Endothelial cell of umbilical vein (primary cell): ENCODE measurements at regions of chr14 and their contacts with region 1.

Region 1: DNA sequence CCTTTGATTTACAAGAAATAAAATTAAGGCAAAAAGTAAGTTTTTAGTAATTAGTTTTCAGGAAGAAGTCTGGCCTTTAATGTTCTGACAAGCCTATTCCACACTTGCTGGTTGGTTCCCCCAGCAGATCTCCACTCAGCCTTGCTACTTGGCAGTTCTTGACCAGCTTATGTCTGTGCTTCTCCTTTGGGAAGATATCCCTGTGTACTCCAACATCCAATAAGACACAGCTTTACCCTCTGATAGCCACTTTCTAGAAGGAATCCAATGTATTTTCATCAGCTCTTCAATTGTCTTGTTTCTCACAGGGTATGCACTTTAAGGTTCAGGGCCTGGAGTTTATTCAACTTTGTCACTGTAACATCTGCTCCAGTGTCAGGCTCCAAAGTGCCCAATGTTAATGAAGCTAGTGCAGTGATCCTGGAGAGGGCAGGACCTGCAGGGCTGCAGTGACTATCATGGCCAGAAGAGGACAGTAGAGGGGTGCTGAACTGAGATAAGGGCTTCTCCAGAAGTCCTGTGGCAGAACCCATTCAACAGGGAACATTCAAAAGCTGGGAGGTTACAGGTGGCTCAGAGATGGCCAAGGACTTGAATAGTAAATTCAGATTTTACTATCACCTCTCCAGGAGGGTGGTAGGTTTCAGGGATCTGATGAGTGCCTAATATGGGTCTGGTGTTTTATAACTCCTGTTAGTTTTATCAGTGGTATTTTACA is 22.9 kb downstream of the JKAMP start:
- DNase-seq: peak; percentile 47
- H3K4me3 ChIP-seq: no peak overlapping the region
- H3K27ac ChIP-seq: no peak overlapping the region
- H3K4me1 ChIP-seq: no peaks in the 10 kb centered on the region
- H3K27me3 ChIP-seq: peaks cover 0 to 7% of the 10 kb centered on the region in 2 experiments
- CTCF ChIP-seq: peak; percentile 75 to 83
- POLR2A ChIP-seq: no peak

Region 2: DNA sequence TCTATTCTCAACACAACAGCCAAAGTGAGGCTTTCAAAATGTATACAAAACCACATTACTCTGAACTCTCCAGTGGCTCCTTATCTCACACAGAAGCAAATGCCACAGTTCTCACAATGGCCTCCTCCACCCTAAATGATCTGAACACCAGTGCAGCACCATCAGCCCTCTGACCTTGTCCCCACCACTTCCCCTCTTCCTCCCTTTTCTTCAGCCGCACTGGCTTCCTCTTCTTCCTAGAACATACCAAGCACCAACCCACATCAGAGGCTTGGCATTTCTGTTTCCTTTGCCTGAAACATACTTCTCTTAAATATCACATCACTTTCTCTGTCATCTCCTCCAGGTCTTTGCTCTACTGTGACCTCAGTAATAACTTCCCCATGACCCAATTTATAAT is 108.4 kb before region 1 on chr14:
- CTCF ChIA-PET with region 1: no interaction called
- POLR2A ChIA-PET with region 1: no interaction called
- dilution Hi-C with region 1: no loop called
- intact Hi-C with region 1: no loop called
- DNase-seq: no peak
- H3K4me3 ChIP-seq: no peak overlapping the region
- H3K27ac ChIP-seq: no peak overlapping the region
- H3K4me1 ChIP-seq: peaks cover 10% of the 10 kb centered on the region
- H3K27me3 ChIP-seq: no peaks in the 10 kb centered on the region
- CTCF ChIP-seq: no peak
- POLR2A ChIP-seq: no peak

Region 3: DNA sequence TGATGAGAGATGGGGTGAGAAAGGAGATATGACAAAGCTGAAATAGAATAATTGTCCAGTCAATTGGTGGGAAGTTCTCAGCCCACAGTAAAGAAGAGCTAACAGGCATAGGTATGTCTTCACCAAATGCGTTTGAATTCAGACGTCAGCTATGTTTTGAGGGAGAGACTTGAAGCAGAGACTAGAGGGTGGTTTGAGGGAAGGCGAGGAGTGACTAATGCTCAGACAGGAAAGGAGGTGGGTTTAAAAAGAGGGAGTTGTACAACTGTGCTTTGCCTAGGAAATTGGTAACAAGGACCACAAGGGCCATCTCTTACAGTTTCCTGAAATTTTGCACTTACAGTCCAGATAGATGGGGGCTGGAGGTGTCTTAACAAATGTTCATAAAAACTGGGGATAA is 16.5 kb before region 1 on chr14:
- CTCF ChIA-PET with region 1: interaction called, 22 read pairs
- POLR2A ChIA-PET with region 1: no interaction called
- dilution Hi-C with region 1: no loop called
- intact Hi-C with region 1: no loop called
- DNase-seq: no peak
- H3K4me3 ChIP-seq: no peak overlapping the region
- H3K27ac ChIP-seq: no peak overlapping the region
- H3K4me1 ChIP-seq: peaks cover 5% of the 10 kb centered on the region
- H3K27me3 ChIP-seq: no peaks in the 10 kb centered on the region
- CTCF ChIP-seq: no peak
- POLR2A ChIP-seq: no peak

Region 4: GRCh38 chr14:59570114-59570513 is 62.9 kb after region 1 on chr14:
- CTCF ChIA-PET with region 1: interaction called, 15 read pairs
- POLR2A ChIA-PET with region 1: no interaction called
- dilution Hi-C with region 1: no loop called
- intact Hi-C with region 1: no loop called
- DNase-seq: no peak
- H3K4me3 ChIP-seq: no peak overlapping the region
- H3K27ac ChIP-seq: no peak overlapping the region
- H3K4me1 ChIP-seq: no peaks in the 10 kb centered on the region
- H3K27me3 ChIP-seq: peaks cover 4 to 25% of the 10 kb centered on the region in 2 experiments
- CTCF ChIP-seq: no peak
- POLR2A ChIP-seq: no peak

Region 5: DNA sequence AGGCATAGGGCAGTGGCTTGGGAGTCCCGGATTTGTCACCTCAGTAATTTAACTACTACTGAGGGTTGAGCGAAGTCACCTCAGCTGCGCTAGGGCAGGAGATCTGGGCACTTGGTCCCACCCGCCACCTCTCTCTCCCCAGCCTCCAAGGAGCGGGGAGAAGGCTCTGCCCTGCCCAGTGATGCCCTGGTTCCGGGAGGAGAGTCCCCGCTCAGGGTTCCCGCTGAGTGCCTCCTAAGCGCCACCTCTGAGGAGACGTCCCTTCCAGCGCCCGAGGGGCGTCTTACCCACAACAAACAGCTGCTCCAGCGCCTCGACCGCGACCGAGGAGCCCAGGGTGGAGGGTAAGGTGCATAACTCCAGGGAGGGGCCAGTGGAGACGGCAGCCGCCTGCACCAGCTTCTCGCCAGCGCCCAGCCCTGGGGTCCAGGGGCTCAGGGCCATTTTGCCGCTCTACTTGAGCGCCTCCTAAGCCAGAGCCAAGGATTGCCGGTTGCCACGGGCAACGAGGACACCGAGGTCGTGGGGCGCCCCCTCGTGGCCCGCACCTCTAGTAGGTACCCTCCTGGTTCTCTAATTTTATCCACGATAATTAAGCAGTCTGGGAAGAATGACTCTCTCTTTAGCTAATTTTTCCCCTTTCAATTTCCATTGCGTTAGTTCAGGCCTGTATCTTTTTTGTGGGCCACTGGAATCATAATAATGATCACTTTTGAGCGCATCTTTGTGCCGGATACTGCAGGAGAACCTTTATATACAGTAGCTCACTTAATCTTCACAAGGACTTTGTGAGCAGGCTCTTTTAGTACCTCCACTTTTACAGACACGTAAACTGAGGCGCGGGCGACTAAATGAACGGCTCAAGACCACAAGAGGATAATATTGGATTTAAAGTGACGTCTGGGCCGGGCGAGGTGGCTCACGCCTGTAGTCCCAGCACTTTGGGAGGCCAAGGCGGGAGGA is 69.4 kb after region 1 on chr14 and contains the start of gene CCDC175:
- CTCF ChIA-PET with region 1: interaction called, 37 read pairs
- POLR2A ChIA-PET with region 1: no interaction called
- dilution Hi-C with region 1: no loop called
- intact Hi-C with region 1: loop called (anchors 1 kb)
- DNase-seq: peak; percentile 63
- H3K4me3 ChIP-seq: peak within 1 kb of the TSS in 2 of 3 experiments; percentile 18 to 38
- H3K27ac ChIP-seq: no peak within 1 kb of the TSS
- H3K4me1 ChIP-seq: no peaks in the 10 kb centered on the region
- H3K27me3 ChIP-seq: peaks cover 0 to 13% of the 10 kb centered on the region in 2 experiments
- CTCF ChIP-seq: peak; percentile 81 to 84
- POLR2A ChIP-seq: no peak
- total RNA-seq, gene CCDC175: not detected in 2 replicates

Region 6: DNA sequence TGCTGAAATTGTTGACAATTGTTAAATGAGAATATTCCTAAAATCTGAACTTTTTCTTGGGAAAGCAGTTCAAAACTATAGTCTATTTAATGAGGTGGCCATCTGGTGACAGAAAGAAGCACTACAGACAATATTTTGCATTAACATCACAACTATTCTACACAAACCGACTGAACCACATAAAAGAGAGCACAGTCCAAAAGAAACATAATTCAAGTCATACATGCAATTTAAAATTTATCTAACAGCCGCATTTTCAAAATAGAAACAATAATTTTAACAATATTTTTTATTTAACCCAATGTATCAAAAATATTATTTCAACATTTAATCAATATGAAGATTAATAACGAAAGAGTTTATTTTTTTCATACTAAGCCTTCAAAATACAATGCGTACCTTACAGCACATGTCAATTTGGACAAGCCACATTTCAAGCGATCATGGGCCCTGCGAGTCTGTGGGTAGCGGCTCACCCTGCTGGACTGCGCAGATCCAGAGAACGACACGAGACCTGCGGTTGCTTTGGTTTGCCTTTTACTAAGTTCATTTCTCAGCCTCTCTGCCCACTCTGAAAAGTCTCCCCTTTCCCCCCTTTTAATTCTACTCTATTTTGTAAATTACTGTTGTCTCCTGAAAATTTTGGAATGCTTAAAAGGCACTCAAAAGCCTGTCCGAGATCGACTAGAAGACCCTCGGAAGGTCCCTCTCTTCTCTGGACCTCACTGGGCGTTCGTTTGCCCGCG is 411.8 kb after region 1 on chr14:
- CTCF ChIA-PET with region 1: interaction called, 13 read pairs
- POLR2A ChIA-PET with region 1: no interaction called
- dilution Hi-C with region 1: no loop called
- intact Hi-C with region 1: no loop called
- DNase-seq: peak; percentile 38
- H3K4me3 ChIP-seq: no peak overlapping the region
- H3K27ac ChIP-seq: no peak overlapping the region
- H3K4me1 ChIP-seq: no peaks in the 10 kb centered on the region
- H3K27me3 ChIP-seq: peaks cover 19 to 41% of the 10 kb centered on the region in 2 experiments
- CTCF ChIP-seq: peak; percentile 4 to 21
- POLR2A ChIP-seq: no peak

Region 7: DNA sequence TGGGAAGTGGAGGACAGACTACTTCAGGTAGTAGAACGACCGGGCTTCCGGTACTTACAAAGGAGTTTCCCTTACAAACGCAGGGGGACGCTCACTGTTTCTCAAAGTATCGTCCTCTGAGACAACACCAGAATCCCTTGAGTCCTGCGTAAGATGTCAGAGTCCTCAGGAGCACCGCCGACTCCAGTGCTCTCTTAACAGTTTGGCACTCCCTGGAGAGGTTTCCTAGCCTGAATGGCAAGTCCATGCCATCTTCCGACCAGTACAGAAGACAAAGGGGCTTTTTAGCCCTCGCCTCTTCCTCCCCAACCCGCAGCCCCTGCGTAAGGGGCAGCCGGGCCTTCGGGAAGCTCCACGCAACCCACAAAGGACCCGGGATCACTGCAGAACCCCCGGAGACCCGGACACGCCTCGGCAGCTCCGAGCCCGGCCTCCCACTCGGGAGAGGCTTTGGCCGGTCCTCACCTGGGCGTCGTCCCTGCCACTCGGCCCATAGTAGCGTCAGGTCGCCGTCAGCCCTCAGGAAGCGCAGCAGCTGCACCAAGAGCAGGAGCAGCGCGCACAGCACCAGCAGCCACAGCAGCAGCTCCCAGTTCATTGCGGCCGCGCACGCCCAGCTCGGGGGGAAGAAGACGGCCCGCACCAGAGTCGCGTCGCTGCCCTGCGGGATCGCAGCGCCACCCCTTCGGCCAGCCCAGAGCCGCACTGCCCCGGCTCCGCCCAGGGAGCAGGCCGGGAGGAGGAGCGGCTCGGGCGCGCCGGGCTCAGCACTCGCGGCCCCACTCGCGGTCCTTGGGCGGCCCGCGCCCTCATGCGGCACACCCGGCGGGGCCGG is 657.7 kb after region 1 on chr14 and contains the start of gene DHRS7:
- CTCF ChIA-PET with region 1: no interaction called
- POLR2A ChIA-PET with region 1: no interaction called
- dilution Hi-C with region 1: no loop called
- intact Hi-C with region 1: loop called (anchors 10 kb)
- DNase-seq: peak; percentile 82
- H3K4me3 ChIP-seq: peak within 1 kb of the TSS; percentile 46 to 84 (median 79)
- H3K27ac ChIP-seq: peak within 1 kb of the TSS; percentile 22
- H3K4me1 ChIP-seq: peaks cover 10% of the 10 kb centered on the region
- H3K27me3 ChIP-seq: no peaks in the 10 kb centered on the region
- CTCF ChIP-seq: peak; percentile 12 to 21
- POLR2A ChIP-seq: peak; percentile 59
- total RNA-seq, gene DHRS7: 29.3 and 35.7 TPM in 2 replicates